Dendritic cell treated with granulocyte-macrophage colony-stimulating factor and Interleukin-4, amounts not matched to agents 40 ng/mL and 50 ng/mL, for 4 days (primary cell): ENCODE measurements at regions of chr3 and their contacts with region 1.

Region 1: GRCh38 chr3:108221911-108222852 is at the start of gene IFT57:
- H3K4me3 Mint-ChIP-seq: peak within 1 kb of the TSS; percentile 86
- H3K27ac Mint-ChIP-seq: peak within 1 kb of the TSS; percentile 94
- H3K4me1 Mint-ChIP-seq: peaks cover 40% of the 10 kb centered on the region
- H3K27me3 Mint-ChIP-seq: no peaks in the 10 kb centered on the region

Region 2: GRCh38 chr3:108036984-108037741 is 185.0 kb before region 1 on chr3:
- intact Hi-C with region 1: no loop called
- H3K4me3 Mint-ChIP-seq: no peak overlapping the region
- H3K27ac Mint-ChIP-seq: peak overlapping the region; percentile 86
- H3K4me1 Mint-ChIP-seq: peaks cover 66% of the 10 kb centered on the region
- H3K27me3 Mint-ChIP-seq: no peaks in the 10 kb centered on the region

Region 3: GRCh38 chr3:108133858-108134554 is 88.2 kb before region 1 on chr3:
- intact Hi-C with region 1: loop called (anchors 2 kb)
- H3K4me3 Mint-ChIP-seq: no peak overlapping the region
- H3K27ac Mint-ChIP-seq: no peak overlapping the region
- H3K4me1 Mint-ChIP-seq: peaks cover 44% of the 10 kb centered on the region
- H3K27me3 Mint-ChIP-seq: no peaks in the 10 kb centered on the region

Region 4: GRCh38 chr3:108202837-108203236 is 19.3 kb before region 1 on chr3:
- intact Hi-C with region 1: no loop called
- H3K4me3 Mint-ChIP-seq: no peak overlapping the region
- H3K27ac Mint-ChIP-seq: no peak overlapping the region
- H3K4me1 Mint-ChIP-seq: no peaks in the 10 kb centered on the region
- H3K27me3 Mint-ChIP-seq: no peaks in the 10 kb centered on the region

Region 5: GRCh38 chr3:108292905-108293328 is 70.7 kb after region 1 on chr3:
- intact Hi-C with region 1: loop called (anchors 2 kb)
- H3K4me3 Mint-ChIP-seq: peak overlapping the region; percentile 20
- H3K27ac Mint-ChIP-seq: peak overlapping the region; percentile 85
- H3K4me1 Mint-ChIP-seq: peaks cover 57% of the 10 kb centered on the region
- H3K27me3 Mint-ChIP-seq: no peaks in the 10 kb centered on the region

Region 6: GRCh38 chr3:108406661-108407206 is 184.6 kb after region 1 on chr3:
- intact Hi-C with region 1: loop called (anchors 5 kb)
- H3K4me3 Mint-ChIP-seq: no peak overlapping the region
- H3K27ac Mint-ChIP-seq: no peak overlapping the region
- H3K4me1 Mint-ChIP-seq: peaks cover 16% of the 10 kb centered on the region
- H3K27me3 Mint-ChIP-seq: no peaks in the 10 kb centered on the region